GM12878 (cell line): ENCODE measurements at regions of chr2 and their contacts with region 1.

Region 1: DNA sequence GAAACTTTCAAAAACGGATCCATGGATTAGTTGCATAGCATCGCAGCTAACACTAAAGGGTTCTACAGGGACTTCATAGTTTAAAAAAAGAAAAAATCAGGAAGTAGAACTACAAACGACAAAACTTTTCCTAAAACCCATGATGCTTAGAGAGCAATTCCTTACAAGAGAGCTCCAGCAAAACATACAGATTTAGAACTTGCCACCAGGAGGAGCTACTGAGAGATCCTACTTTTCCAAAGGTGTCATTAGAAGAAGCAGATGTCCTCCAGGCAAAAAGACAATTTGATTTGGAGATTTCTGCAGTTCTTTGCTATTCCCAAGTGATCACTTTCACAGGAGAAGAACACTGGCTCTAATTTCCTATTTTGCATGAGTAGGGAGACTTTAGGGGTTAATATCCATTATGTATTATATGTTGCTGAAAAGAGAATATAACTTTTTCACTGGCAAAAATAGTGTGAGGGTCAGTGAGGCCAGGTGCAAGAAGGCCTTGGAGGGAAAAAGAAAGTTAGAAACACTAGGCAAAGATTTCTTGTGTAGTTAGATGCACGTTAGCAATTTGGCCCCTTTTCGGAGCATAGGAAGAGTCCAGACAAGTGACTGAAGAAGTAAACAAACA is 436.2 kb downstream of the SUCLG1 start:
- DNase-seq: no peak
- ATAC-seq: peak; percentile 49; the same call in 1 of the 3 replicates
- H3K4me3 ChIP-seq: no peak overlapping the region
- H3K27ac ChIP-seq: no peak overlapping the region
- H3K4me1 ChIP-seq: no peaks in the 10 kb centered on the region
- H3K27me3 ChIP-seq: no peaks in the 10 kb centered on the region
- CTCF ChIP-seq: peak; percentile 59 to 70 (median 64); a peak in 5 of 6 replicates
- EP300 ChIP-seq: no peak
- POLR2A ChIP-seq: no peak
- RAD21 ChIP-seq: peak; percentile 52

Region 2: DNA sequence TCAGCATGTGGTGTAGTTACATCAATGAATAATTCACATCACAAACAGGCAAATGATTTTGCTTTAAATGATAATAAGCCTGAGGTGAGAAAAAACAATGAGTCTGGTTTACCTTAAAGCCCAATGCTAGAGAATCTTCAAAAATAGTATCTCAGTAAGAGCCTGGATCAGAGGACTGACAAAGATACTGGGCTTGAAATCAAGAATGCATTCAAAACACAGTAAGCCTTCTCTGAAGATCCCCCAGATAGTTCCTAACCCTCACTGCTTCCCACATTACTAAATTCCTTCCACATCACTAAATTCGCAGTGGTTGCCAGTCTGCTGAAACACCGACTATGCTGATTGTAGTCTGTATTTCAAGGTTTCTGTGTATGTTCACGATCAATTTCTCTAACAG is 78.7 kb before region 1 on chr2:
- CTCF ChIA-PET with region 1: no interaction called
- POLR2A ChIA-PET with region 1: no interaction called
- RAD21 ChIA-PET with region 1: no interaction called
- SMC1A ChIA-PET with region 1: no interaction called
- in situ Hi-C with region 1: no loop called
- intact Hi-C with region 1: no loop called
- DNase-seq: no peak
- ATAC-seq: no peak
- H3K4me3 ChIP-seq: no peak overlapping the region
- H3K27ac ChIP-seq: no peak overlapping the region
- H3K4me1 ChIP-seq: no peaks in the 10 kb centered on the region
- H3K27me3 ChIP-seq: no peaks in the 10 kb centered on the region
- CTCF ChIP-seq: no peak
- EP300 ChIP-seq: no peak
- POLR2A ChIP-seq: no peak
- RAD21 ChIP-seq: no peak

Region 3: GRCh38 chr2:84033347-84033974 is 10.5 kb after region 1 on chr2:
- CTCF ChIA-PET with region 1: interaction called, 27 read pairs
- POLR2A ChIA-PET with region 1: no interaction called
- RAD21 ChIA-PET with region 1: interaction called, 3 read pairs
- SMC1A ChIA-PET with region 1: interaction called, 9 read pairs
- in situ Hi-C with region 1: no loop called
- intact Hi-C with region 1: no loop called
- DNase-seq: no peak
- ATAC-seq: 0 out of 3 replicates have a peak, but pooled peaks have one; percentile 20
- H3K4me3 ChIP-seq: no peak overlapping the region
- H3K27ac ChIP-seq: no peak overlapping the region
- H3K4me1 ChIP-seq: no peaks in the 10 kb centered on the region
- H3K27me3 ChIP-seq: no peaks in the 10 kb centered on the region
- CTCF ChIP-seq: no peak
- EP300 ChIP-seq: no peak
- POLR2A ChIP-seq: no peak
- RAD21 ChIP-seq: no peak

Region 4: DNA sequence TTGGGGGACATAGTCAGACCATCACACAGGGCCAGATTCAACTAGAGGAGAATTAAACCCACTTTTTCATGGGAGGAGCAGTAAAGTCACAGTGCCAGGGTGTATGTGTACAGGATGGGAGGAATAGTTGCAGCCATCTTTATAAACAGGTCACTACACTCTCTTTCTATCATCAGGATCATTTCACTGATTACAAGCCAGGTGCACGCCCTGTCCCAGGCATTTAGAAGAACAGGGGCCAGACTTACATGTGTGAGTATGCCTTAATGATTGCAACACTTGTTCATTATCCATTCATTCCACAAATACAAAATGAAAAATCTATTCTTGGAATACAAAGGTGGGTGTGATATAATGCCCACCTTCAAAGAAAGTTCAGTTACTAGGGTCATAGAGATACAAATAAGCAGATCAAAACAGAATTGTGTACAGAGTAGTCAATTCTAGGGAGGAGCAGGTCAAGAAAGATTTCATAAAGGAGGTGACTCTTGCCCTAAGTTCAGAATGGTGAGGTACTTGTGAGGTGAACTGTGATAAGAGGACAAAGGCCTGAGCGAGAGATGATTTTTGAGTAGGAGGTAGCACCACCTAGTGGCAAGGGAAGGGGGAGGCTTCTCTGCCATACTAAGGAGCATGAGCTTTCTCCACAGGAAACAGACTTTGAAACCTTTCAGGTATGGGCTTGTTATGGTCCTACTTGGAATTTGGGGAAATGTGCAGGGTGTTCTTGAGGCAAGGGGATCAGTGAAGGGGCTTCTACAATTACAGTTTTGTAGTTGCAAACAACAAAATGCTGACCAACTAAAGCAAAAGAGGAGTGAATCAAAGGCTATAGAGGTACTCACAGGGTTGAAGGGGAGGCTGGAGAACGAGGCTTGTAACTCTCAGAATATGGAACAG is 279.8 kb after region 1 on chr2:
- CTCF ChIA-PET with region 1: interaction called, 28 read pairs
- POLR2A ChIA-PET with region 1: no interaction called
- RAD21 ChIA-PET with region 1: interaction called, 8 read pairs
- SMC1A ChIA-PET with region 1: interaction called, 18 read pairs
- in situ Hi-C with region 1: loop called (anchors 5 kb)
- intact Hi-C with region 1: loop called (anchors 1 kb)
- DNase-seq: peak; percentile 16
- ATAC-seq: peak; percentile 99
- H3K4me3 ChIP-seq: no peak overlapping the region
- H3K27ac ChIP-seq: no peak overlapping the region
- H3K4me1 ChIP-seq: no peaks in the 10 kb centered on the region
- H3K27me3 ChIP-seq: no peaks in the 10 kb centered on the region
- CTCF ChIP-seq: peak; percentile 88 to 93 (median 88)
- EP300 ChIP-seq: no peak
- POLR2A ChIP-seq: no peak
- RAD21 ChIP-seq: peak; percentile 80